MCF 10A (cell line): ENCODE measurements at regions of chr9 and their contacts with region 1.

Region 1: DNA sequence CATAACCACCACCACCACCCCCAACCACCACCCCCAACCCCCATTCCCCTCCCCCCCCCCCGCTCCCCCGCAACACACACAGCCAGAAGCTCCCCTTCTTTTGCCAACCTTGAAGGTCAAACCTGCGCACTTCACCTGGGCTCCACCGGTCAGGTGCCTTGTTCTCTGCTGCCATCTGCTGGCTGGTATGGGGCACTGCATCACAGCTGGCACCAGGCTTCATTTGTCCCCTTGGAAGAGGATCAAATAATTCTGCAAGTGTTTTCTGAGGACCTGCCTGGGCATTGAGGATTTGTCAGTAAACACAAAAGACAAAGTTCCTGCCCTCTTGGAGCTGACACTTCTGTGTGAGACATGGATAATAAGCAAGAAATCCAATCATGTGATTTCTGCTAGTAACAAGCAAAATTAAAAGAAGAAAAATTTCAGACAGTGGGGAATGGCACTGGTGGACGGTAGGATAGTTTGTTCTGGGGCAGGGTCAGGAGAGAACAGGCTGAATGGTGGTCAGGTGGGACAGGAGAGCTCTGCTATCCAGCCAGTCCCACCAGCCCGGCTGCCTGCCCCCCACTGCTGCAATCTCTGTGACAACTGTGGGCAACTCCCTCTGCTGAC is 55.6 kb upstream of the LMX1B start:
- DNase-seq: peak; percentile 74
- H3K4me3 Mint-ChIP-seq: no peak overlapping the region
- H3K27ac Mint-ChIP-seq: no peak overlapping the region
- H3K4me1 Mint-ChIP-seq: no peaks in the 10 kb centered on the region
- H3K27me3 Mint-ChIP-seq: peaks cover 34% of the 10 kb centered on the region
- CTCF ChIP-seq: peak; percentile 98

Region 2: DNA sequence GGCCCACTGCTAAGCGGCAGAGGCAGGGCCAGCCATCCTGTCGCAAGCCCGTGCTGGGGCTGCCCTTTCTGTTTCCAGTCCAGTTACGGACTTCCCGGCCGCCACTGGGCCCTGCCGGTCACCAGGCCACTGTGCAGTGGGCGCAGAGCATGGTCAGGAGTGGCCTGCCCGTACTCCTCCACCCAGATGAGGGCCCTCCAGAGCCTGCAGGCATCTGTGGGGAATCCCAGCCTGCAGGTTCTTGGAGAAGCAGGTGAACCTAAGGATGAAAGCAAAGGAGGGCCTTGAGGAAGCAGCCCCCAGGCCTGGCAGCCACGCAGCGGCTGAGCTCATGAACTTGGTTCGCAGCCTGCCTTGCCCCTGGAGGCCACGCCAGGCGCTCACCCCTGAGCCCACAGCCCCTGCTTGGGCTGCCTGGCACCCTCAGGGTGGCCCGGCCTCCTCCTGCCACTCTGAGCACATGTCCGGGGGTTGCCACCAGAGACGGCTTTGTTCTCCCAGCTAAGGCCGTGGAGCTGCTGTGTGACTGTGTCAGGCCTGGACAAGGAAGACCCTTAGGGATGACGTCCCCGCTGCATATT is 51.7 kb before region 1 on chr9:
- CTCF ChIA-PET with region 1: interaction called, 217 read pairs
- POLR2A ChIA-PET with region 1: interaction called, 3 read pairs
- intact Hi-C with region 1: loop called (anchors 1 kb)
- DNase-seq: no peak
- H3K4me3 Mint-ChIP-seq: no peak overlapping the region
- H3K27ac Mint-ChIP-seq: no peak overlapping the region
- H3K4me1 Mint-ChIP-seq: no peaks in the 10 kb centered on the region
- H3K27me3 Mint-ChIP-seq: no peaks in the 10 kb centered on the region
- CTCF ChIP-seq: no peak

Region 3: GRCh38 chr9:126523611-126524111 is 34.5 kb before region 1 on chr9:
- CTCF ChIA-PET with region 1: interaction called, 15 read pairs
- POLR2A ChIA-PET with region 1: no interaction called
- intact Hi-C with region 1: no loop called
- DNase-seq: no peak
- H3K4me3 Mint-ChIP-seq: no peak overlapping the region
- H3K27ac Mint-ChIP-seq: no peak overlapping the region
- H3K4me1 Mint-ChIP-seq: no peaks in the 10 kb centered on the region
- H3K27me3 Mint-ChIP-seq: peaks cover 21% of the 10 kb centered on the region
- CTCF ChIP-seq: no peak

Region 4: DNA sequence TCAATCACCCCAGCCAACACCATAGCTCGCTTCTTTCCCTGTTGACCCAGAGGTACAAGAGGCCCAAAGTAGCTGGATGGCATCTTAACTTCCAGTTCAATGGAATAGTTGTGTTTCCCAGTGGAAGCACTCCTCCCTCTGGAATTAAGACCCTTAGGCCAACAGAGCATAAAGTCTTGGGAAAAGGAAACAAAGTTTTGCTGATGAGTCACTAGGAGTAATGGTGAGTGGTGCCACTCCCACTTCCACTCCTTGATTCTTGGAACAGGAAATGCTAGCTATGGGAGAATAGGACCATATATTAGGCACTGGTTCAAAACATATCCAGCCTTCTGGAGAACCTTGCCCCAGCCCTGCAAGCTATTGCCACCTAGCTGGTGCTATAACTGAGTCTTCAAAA is 10.9 kb after region 1 on chr9:
- CTCF ChIA-PET with region 1: interaction called, 13 read pairs
- POLR2A ChIA-PET with region 1: interaction called, 3 read pairs
- intact Hi-C with region 1: no loop called
- DNase-seq: peak; percentile 76
- H3K4me3 Mint-ChIP-seq: no peak overlapping the region
- H3K27ac Mint-ChIP-seq: no peak overlapping the region
- H3K4me1 Mint-ChIP-seq: peaks cover 7% of the 10 kb centered on the region
- H3K27me3 Mint-ChIP-seq: peaks cover 20% of the 10 kb centered on the region
- CTCF ChIP-seq: no peak

Region 5: GRCh38 chr9:126661521-126662220 is 103.5 kb after region 1 on chr9:
- CTCF ChIA-PET with region 1: no interaction called
- POLR2A ChIA-PET with region 1: no interaction called
- intact Hi-C with region 1: no loop called
- DNase-seq: peak; percentile 35
- H3K4me3 Mint-ChIP-seq: no peak overlapping the region
- H3K27ac Mint-ChIP-seq: no peak overlapping the region
- H3K4me1 Mint-ChIP-seq: no peaks in the 10 kb centered on the region
- H3K27me3 Mint-ChIP-seq: no peaks in the 10 kb centered on the region
- CTCF ChIP-seq: no peak

Region 6: DNA sequence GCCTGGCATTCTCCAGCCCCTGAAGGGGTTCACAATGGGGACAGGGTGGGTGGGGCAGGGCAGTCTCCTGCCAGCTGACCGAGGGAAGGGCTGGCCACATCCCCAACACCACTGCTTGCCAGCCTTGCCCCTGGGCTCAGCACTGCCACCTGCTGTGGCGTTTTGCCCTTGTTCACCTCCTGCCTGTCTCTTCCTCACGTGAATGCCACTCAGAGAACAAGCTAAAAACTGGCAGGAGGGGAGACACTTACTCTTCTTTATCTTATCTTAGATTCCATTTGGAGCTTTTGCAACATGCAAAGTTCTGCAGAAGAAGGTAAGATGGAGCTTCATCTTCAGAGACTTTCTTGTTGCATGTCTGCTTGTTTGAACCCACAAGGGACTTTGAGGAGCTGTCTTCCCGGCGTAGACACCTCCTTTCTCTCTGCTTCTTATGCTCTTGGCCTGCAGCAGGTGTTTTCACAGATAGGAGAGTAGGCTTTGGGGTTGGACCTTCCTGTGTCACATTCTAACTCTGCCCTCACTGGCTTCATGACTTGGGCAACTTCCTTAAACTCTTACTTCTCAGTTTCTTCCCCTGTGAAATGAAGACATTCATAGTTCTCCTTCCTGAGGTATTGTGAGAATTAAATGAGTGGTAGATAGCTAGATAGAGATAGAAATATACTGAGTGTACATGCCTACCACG is 897.3 kb after region 1 on chr9:
- CTCF ChIA-PET with region 1: no interaction called
- POLR2A ChIA-PET with region 1: no interaction called
- intact Hi-C with region 1: no loop called
- DNase-seq: peak; percentile 32
- H3K4me3 Mint-ChIP-seq: no peak overlapping the region
- H3K27ac Mint-ChIP-seq: no peak overlapping the region
- H3K4me1 Mint-ChIP-seq: peaks cover 5% of the 10 kb centered on the region
- H3K27me3 Mint-ChIP-seq: no peaks in the 10 kb centered on the region
- CTCF ChIP-seq: peak; percentile 26